ENCODE measurements at regions of chr11 and their contacts with region 1.

Region 1: GRCh38 chr11:104151404-104152204 is 12.3 kb downstream of the PDGFD start:
- DNase-seq: peak; percentile 41
- H3K4me3 ChIP-seq: no peak overlapping the region
- H3K27ac ChIP-seq: no peak overlapping the region
- H3K4me1 ChIP-seq: peaks cover 6% of the 10 kb centered on the region
- H3K27me3 ChIP-seq: no peaks in the 10 kb centered on the region
- CTCF ChIP-seq: peak in 1 of 2 donors; percentile 19
- POLR2A ChIP-seq: no peak

Region 2: GRCh38 chr11:103108933-103109817 is 1042.4 kb before region 1 on chr11 and contains the start of gene DYNC2H1:
- CTCF ChIA-PET with region 1: no interaction called
- POLR2A ChIA-PET with region 1: no interaction called
- dilution Hi-C with region 1: no loop called
- intact Hi-C with region 1: loop called (anchors 10 kb)
- DNase-seq: peak; percentile 92
- H3K4me3 ChIP-seq: peak within 1 kb of the TSS; percentile 21 to 73 (median 71)
- H3K27ac ChIP-seq: no peak within 1 kb of the TSS
- H3K4me1 ChIP-seq: peaks cover 6% of the 10 kb centered on the region
- H3K27me3 ChIP-seq: peaks cover 7 to 15% of the 10 kb centered on the region in 2 experiments
- CTCF ChIP-seq: peak; percentile 39 to 66
- POLR2A ChIP-seq: peak; percentile 41
- total RNA-seq, gene DYNC2H1: 4.2 and 5.7 TPM in 2 replicates

Region 3: GRCh38 chr11:103202048-103202651 is 949.5 kb before region 1 on chr11:
- CTCF ChIA-PET with region 1: no interaction called
- POLR2A ChIA-PET with region 1: no interaction called
- dilution Hi-C with region 1: no loop called
- intact Hi-C with region 1: loop called (anchors 10 kb)
- DNase-seq: peak; percentile 56
- H3K4me3 ChIP-seq: no peak overlapping the region
- H3K27ac ChIP-seq: no peak overlapping the region
- H3K4me1 ChIP-seq: no peaks in the 10 kb centered on the region
- H3K27me3 ChIP-seq: no peaks in the 10 kb centered on the region
- CTCF ChIP-seq: peak; percentile 42 to 50
- POLR2A ChIP-seq: no peak

Region 4: GRCh38 chr11:103326070-103326794 is 825.4 kb before region 1 on chr11:
- CTCF ChIA-PET with region 1: no interaction called
- POLR2A ChIA-PET with region 1: no interaction called
- dilution Hi-C with region 1: no loop called
- intact Hi-C with region 1: loop called (anchors 10 kb)
- DNase-seq: peak; percentile 77
- H3K4me3 ChIP-seq: no peak overlapping the region
- H3K27ac ChIP-seq: no peak overlapping the region
- H3K4me1 ChIP-seq: peaks cover 8% of the 10 kb centered on the region
- H3K27me3 ChIP-seq: no peaks in the 10 kb centered on the region
- CTCF ChIP-seq: peak; percentile 67 to 74
- POLR2A ChIP-seq: no peak

Region 5: GRCh38 chr11:103875855-103876510 is 275.6 kb before region 1 on chr11:
- CTCF ChIA-PET with region 1: interaction called, 3 read pairs
- POLR2A ChIA-PET with region 1: no interaction called
- dilution Hi-C with region 1: no loop called
- intact Hi-C with region 1: loop called (anchors 1 kb)
- DNase-seq: no peak
- H3K4me3 ChIP-seq: no peak overlapping the region
- H3K27ac ChIP-seq: no peak overlapping the region
- H3K4me1 ChIP-seq: no peaks in the 10 kb centered on the region
- H3K27me3 ChIP-seq: no peaks in the 10 kb centered on the region
- CTCF ChIP-seq: no peak
- POLR2A ChIP-seq: no peak

Region 6: DNA sequence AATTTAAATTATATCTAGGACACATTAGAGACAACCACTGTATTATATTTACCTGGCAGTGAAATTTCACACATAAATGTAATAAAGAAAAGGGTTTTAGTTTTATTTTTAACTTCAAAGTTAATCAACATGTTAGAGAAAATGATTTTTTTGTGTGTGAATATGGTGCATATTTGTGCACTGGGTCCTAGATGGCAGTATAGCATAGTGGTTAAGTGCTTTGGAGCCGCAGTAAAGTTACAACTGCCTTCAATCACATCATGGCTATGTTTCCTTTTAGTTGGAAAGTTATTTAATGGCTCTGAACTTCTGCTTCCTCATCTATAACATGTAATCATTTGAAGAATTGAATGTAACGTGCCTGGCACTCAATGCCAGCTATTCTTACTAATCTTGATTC is 224.1 kb before region 1 on chr11:
- CTCF ChIA-PET with region 1: no interaction called
- POLR2A ChIA-PET with region 1: no interaction called
- dilution Hi-C with region 1: no loop called
- intact Hi-C with region 1: loop called (anchors 1 kb)
- DNase-seq: no peak
- H3K4me3 ChIP-seq: no peak overlapping the region
- H3K27ac ChIP-seq: no peak overlapping the region
- H3K4me1 ChIP-seq: no peaks in the 10 kb centered on the region
- H3K27me3 ChIP-seq: no peaks in the 10 kb centered on the region
- CTCF ChIP-seq: no peak
- POLR2A ChIP-seq: no peak

Region 7: DNA sequence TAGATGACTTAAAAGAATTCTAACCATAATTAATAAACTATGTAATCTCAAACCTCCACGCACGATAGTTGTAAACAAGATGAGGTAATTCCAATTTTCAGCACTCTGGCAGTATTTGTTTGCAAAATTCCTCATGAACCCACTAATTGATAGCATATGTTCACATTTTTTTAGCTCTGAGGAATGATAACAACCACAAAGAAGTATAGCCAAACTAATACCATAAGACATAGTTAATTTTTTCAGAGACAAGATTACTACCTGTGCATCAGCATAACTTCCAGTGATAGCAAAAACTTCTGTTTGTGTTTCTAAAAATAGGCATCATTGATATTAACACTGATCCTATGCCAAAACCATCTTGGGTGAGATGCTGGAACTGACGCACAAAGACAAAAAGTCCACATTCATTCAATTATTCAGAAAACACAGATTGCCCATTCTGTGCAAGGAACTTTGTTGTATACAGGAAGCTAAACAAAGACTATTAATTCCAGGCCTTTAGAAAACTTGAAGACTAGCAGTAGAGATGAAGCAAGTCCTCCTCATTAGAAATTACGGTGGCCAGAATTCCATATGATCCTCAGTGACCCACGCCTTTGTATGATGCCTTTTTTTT is 45.4 kb before region 1 on chr11:
- CTCF ChIA-PET with region 1: no interaction called
- POLR2A ChIA-PET with region 1: no interaction called
- dilution Hi-C with region 1: no loop called
- intact Hi-C with region 1: no loop called
- DNase-seq: no peak
- H3K4me3 ChIP-seq: no peak overlapping the region
- H3K27ac ChIP-seq: no peak overlapping the region
- H3K4me1 ChIP-seq: no peaks in the 10 kb centered on the region
- H3K27me3 ChIP-seq: no peaks in the 10 kb centered on the region
- CTCF ChIP-seq: no peak
- POLR2A ChIP-seq: no peak

Region 8: DNA sequence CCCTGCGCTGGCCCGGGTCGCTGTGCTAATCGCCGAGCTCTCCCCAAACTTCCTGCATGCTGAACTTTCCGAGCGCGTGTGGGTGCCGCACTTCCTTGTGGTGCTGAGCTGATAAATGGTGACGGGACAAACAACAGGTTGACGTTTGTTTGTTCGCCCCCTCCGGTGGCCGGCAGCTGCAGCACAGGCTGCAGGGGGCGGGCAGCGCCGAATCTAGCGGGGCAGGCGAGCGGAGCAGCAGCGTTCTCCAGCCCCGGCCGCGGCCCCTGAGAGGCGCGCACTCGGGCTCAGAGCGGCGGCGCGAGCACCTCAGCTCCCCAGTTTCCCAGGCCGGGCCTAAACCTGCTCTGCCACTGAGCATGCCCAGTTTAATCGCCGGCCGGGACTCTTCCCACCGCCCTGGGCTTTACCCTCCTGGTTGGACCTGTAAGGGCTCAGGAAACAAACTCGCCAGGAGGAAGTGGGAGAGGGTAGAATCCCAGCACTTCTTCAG is 12.5 kb after region 1 on chr11 and contains the start of gene PDGFD:
- CTCF ChIA-PET with region 1: interaction called, 10 read pairs
- POLR2A ChIA-PET with region 1: no interaction called
- dilution Hi-C with region 1: no loop called
- intact Hi-C with region 1: no loop called
- DNase-seq: peak; percentile 89
- H3K4me3 ChIP-seq: peak within 1 kb of the TSS; percentile 66 to 94 (median 93)
- H3K27ac ChIP-seq: peak within 1 kb of the TSS; percentile 52
- H3K4me1 ChIP-seq: peaks cover 10% of the 10 kb centered on the region
- H3K27me3 ChIP-seq: no peaks in the 10 kb centered on the region
- CTCF ChIP-seq: peak; percentile 57 to 73
- POLR2A ChIP-seq: no peak
- total RNA-seq, gene PDGFD: 13.1 and 14.1 TPM in 2 replicates

Region 9: GRCh38 chr11:104175769-104176168 is 24.2 kb after region 1 on chr11:
- CTCF ChIA-PET with region 1: no interaction called
- POLR2A ChIA-PET with region 1: no interaction called
- dilution Hi-C with region 1: no loop called
- intact Hi-C with region 1: no loop called
- DNase-seq: no peak
- H3K4me3 ChIP-seq: no peak overlapping the region
- H3K27ac ChIP-seq: no peak overlapping the region
- H3K4me1 ChIP-seq: no peaks in the 10 kb centered on the region
- H3K27me3 ChIP-seq: peaks cover 0 to 5% of the 10 kb centered on the region in 2 experiments
- CTCF ChIP-seq: no peak
- POLR2A ChIP-seq: no peak

Measured in endothelial cell of umbilical vein (primary cell).